WTC11 (cell line): ENCODE measurements at regions of chr6 and their contacts with region 1.

Region 1: DNA sequence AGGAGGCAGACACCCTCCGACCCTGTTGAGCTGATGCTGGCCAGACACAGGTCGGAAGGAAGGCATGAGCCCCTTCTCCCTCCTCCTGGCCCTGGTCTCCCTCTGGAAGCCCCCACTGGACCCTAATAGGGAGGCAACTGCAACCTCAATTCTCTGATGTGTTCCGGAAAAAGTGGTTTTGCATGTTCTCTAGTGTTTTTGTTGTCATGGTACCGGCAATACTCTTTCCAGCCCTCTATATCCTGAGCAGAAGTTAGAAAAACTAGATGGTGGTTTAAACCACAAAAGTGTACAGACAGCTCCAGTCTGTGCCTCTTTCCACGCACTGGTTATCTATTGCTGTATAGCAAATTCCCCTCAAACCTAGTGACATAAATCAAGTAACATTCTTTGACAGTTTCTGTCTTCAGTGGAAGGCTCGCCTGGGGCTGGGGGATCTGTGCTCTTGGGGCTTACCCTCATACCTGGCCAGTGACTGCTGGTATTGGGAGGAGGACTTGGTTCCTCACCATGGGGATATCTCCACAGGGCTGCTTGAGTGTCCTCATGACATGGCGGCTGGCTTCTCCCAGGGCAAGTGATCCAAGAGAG is 37.0 kb downstream of the SYTL3 start:
- DNase-seq: no peak
- ATAC-seq: peak; percentile 30; the same call in 1 of the 2 replicates
- H3K4me3 Mint-ChIP-seq: no peak overlapping the region
- H3K27ac Mint-ChIP-seq: no peak overlapping the region
- H3K4me1 Mint-ChIP-seq: peaks cover 17% of the 10 kb centered on the region
- H3K27me3 Mint-ChIP-seq: no peaks in the 10 kb centered on the region; the same call in 1 of the 2 replicates
- CTCF ChIP-seq: no peak

Region 2: GRCh38 chr6:158509465-158509864 is 177.4 kb before region 1 on chr6:
- CTCF ChIA-PET with region 1: no interaction called
- POLR2A ChIA-PET with region 1: no interaction called
- DNase-seq: no peak
- ATAC-seq: no peak
- H3K4me3 Mint-ChIP-seq: no peak overlapping the region
- H3K27ac Mint-ChIP-seq: no peak overlapping the region
- H3K4me1 Mint-ChIP-seq: peaks cover 3% of the 10 kb centered on the region
- H3K27me3 Mint-ChIP-seq: no peaks in the 10 kb centered on the region
- CTCF ChIP-seq: no peak

Region 3: GRCh38 chr6:158559895-158560835 is 126.7 kb before region 1 on chr6 and contains the start of gene TMEM181:
- CTCF ChIA-PET with region 1: no interaction called
- POLR2A ChIA-PET with region 1: no interaction called
- DNase-seq: peak; percentile 76
- ATAC-seq: peak; percentile 74
- H3K4me3 Mint-ChIP-seq: peak within 1 kb of the TSS; percentile 92
- H3K27ac Mint-ChIP-seq: peak within 1 kb of the TSS; percentile 93
- H3K4me1 Mint-ChIP-seq: peaks cover 27% of the 10 kb centered on the region
- H3K27me3 Mint-ChIP-seq: no peaks in the 10 kb centered on the region
- CTCF ChIP-seq: no peak
- total RNA-seq, gene TMEM181: 18.8 to 22.1 TPM (median 21.2 TPM) in 3 replicates

Region 4: GRCh38 chr6:158629367-158630221 is 57.3 kb before region 1 on chr6:
- CTCF ChIA-PET with region 1: interaction called, 11 read pairs
- POLR2A ChIA-PET with region 1: no interaction called
- DNase-seq: peak; percentile 57
- ATAC-seq: peak; percentile 76
- H3K4me3 Mint-ChIP-seq: no peak overlapping the region
- H3K27ac Mint-ChIP-seq: peak overlapping the region; percentile 55
- H3K4me1 Mint-ChIP-seq: peaks cover 18% of the 10 kb centered on the region
- H3K27me3 Mint-ChIP-seq: no peaks in the 10 kb centered on the region
- CTCF ChIP-seq: no peak

Region 5: GRCh38 chr6:158644231-158645063 is 42.4 kb before region 1 on chr6 and contains the start of gene DYNLT1:
- CTCF ChIA-PET with region 1: interaction called, 16 read pairs
- POLR2A ChIA-PET with region 1: interaction called, 5 read pairs
- DNase-seq: peak; percentile 94
- ATAC-seq: peak; percentile 96
- H3K4me3 Mint-ChIP-seq: peak within 1 kb of the TSS; percentile 97
- H3K27ac Mint-ChIP-seq: peak within 1 kb of the TSS; percentile 95
- H3K4me1 Mint-ChIP-seq: peaks cover 33% of the 10 kb centered on the region
- H3K27me3 Mint-ChIP-seq: peaks cover 15% of the 10 kb centered on the region
- CTCF ChIP-seq: no peak
- total RNA-seq, gene DYNLT1: 79.0 to 98.1 TPM (median 91.8 TPM) in 3 replicates

Region 6: DNA sequence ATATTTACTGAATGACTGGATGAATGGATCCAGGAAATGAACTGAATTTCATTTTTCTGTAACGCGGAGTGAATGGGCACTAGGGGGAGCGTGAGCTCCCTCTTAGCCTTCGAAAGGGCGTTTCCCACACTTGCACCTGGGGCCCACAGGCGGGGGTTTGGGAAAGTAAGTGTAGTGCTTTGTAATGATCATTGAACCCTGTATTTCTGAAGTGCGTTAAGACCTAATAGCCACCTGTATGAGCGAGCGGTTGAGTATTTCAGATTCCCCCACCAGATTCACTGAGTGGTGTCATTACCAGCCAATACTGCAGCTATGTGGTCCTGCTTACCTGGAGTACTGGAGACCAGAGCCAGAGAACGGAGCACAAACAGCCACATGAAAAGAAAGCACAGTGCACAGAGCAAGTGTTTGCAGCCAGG is 26.5 kb before region 1 on chr6:
- CTCF ChIA-PET with region 1: interaction called, 42 read pairs
- POLR2A ChIA-PET with region 1: no interaction called
- DNase-seq: peak; percentile 52
- ATAC-seq: peak; percentile 78
- H3K4me3 Mint-ChIP-seq: no peak overlapping the region
- H3K27ac Mint-ChIP-seq: no peak overlapping the region
- H3K4me1 Mint-ChIP-seq: peaks cover 23% of the 10 kb centered on the region
- H3K27me3 Mint-ChIP-seq: peaks cover 2% of the 10 kb centered on the region; the same call in 1 of the 2 replicates
- CTCF ChIP-seq: no peak; the same call in 1 of the 2 replicates

Region 7: GRCh38 chr6:158704181-158704822 is 17.4 kb after region 1 on chr6:
- CTCF ChIA-PET with region 1: interaction called, 24 read pairs
- POLR2A ChIA-PET with region 1: no interaction called
- DNase-seq: peak; percentile 86
- ATAC-seq: peak; percentile 94
- H3K4me3 Mint-ChIP-seq: peak overlapping the region; percentile 57
- H3K27ac Mint-ChIP-seq: no peak overlapping the region
- H3K4me1 Mint-ChIP-seq: peaks cover 14% of the 10 kb centered on the region
- H3K27me3 Mint-ChIP-seq: peaks cover 2% of the 10 kb centered on the region; the same call in 1 of the 2 replicates
- CTCF ChIP-seq: peak; percentile 93